ENCODE measurements at regions of chr5 and their contacts with region 1.

Region 1: DNA sequence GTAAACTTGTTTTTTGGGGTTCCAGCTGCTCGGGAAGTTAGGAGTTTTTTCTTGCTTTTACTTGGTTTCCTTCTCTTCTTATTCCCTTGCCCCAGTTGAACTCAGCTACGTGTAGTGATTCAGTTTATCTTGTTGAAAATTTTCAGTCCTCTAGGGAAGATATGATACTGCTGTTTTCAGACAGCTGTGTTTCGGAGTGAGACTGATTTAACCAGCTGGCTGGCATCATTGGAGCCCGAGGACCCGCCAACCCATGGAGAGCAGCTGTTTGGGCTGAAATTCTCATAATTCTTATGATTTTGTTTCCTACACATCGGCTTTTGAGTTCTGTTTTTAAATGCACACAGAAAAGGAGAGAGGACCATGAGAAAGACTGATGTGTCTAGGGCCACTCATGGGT is 271.5 kb downstream of the NR3C1 start:
- DNase-seq: no peak
- H3K4me3 Mint-ChIP-seq: no peak overlapping the region
- H3K27ac Mint-ChIP-seq: no peak overlapping the region
- H3K4me1 Mint-ChIP-seq: no peaks in the 10 kb centered on the region
- H3K27me3 Mint-ChIP-seq: no peaks in the 10 kb centered on the region

Region 2: GRCh38 chr5:142036918-142037317 is 1095.1 kb before region 1 on chr5:
- CTCF ChIA-PET with region 1: no interaction called
- POLR2A ChIA-PET with region 1: no interaction called
- intact Hi-C with region 1: no loop called
- DNase-seq: no peak
- H3K4me3 Mint-ChIP-seq: no peak overlapping the region
- H3K27ac Mint-ChIP-seq: no peak overlapping the region
- H3K4me1 Mint-ChIP-seq: peaks cover 13% of the 10 kb centered on the region
- H3K27me3 Mint-ChIP-seq: no peaks in the 10 kb centered on the region

Region 3: DNA sequence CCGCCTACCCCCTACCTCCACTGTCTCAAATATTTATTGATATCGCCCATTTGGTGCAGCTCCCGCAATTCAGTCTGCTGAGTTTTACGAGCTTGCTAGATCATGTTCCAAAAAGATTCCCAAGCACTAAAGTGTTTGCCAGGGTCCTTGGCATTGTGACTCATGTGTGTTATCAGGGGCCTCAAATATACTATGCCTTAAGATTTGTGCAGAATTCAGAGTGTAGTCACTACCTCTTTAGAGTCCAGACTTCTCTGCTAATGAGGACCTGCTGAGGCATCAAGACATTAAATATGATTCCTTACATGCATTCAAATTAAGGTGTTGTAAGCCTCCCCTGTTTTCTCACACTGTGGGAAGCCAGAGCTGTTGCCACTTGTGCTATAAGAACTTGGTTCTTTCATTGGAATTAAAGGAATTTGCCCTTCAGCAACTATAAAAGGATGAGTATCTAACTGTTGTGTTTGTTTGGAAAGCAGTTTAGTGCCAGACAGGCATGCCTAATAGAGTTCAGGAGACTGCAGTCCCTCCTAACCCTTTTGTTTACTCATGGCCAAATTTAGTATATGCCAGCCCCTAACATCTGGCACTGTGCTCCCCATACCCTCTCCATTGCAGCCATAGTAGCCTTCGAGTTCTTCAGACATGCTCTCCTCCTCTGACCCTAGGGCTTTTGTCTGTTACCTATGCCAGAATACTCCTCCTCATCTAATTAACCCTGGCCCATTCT is 44.9 kb before region 1 on chr5:
- CTCF ChIA-PET with region 1: no interaction called
- POLR2A ChIA-PET with region 1: no interaction called
- intact Hi-C with region 1: no loop called
- DNase-seq: no peak
- H3K4me3 Mint-ChIP-seq: no peak overlapping the region
- H3K27ac Mint-ChIP-seq: no peak overlapping the region
- H3K4me1 Mint-ChIP-seq: peaks cover 6% of the 10 kb centered on the region
- H3K27me3 Mint-ChIP-seq: no peaks in the 10 kb centered on the region

Region 4: DNA sequence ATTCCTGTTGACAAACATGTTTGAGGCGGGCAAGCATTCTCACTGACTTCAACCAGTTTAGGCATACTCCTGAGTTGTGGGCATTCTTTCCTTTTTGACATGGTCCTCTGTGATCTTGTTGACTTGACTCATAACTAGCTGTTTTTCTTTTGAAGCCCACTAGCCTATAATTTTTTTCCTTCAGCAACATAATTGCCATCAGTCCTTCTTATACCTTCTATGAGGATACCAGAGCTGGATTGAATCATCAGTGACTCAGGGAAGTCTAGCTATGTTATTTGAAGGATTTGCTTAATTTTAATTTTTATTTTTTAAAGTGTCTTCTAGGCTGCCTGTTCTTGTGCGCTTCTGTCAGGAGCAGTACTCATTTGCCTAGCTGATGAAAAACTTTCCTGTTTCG is 12.0 kb after region 1 on chr5:
- CTCF ChIA-PET with region 1: no interaction called
- POLR2A ChIA-PET with region 1: no interaction called
- intact Hi-C with region 1: loop called (anchors 2 kb)
- DNase-seq: no peak
- H3K4me3 Mint-ChIP-seq: no peak overlapping the region
- H3K27ac Mint-ChIP-seq: no peak overlapping the region
- H3K4me1 Mint-ChIP-seq: peaks cover 12% of the 10 kb centered on the region
- H3K27me3 Mint-ChIP-seq: no peaks in the 10 kb centered on the region

Region 5: DNA sequence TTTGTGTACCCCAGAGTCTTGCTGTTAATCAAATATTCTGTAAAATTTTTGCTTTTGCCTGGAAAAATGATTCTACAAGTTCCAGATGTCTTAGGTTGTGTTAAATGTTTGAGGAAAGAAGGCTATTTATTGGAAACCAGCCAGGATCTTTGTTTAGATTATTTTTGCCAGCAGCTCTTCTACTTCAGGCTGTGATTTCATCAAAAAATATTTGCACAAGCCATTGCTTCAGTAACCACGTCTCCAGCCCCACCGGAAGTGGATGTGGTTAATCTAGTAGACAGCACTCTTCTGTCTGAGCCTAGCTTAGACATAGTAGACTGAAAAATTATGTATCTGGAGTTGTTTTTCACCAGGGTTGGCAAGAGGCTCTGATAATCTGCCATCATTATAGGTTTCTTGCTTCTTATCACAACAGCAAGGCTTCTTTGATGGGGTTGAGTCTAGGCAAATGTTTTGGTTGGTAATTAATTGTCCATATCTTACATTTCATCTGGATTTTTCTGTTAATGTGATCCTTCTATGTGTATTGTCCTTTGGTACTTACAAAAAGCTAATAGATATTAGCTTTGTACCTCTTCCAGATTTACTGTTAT is 1055.8 kb after region 1 on chr5:
- CTCF ChIA-PET with region 1: no interaction called
- POLR2A ChIA-PET with region 1: no interaction called
- intact Hi-C with region 1: no loop called
- DNase-seq: peak; percentile 86
- H3K4me3 Mint-ChIP-seq: peak overlapping the region; percentile 23
- H3K27ac Mint-ChIP-seq: peak overlapping the region; percentile 89
- H3K4me1 Mint-ChIP-seq: peaks cover 48% of the 10 kb centered on the region
- H3K27me3 Mint-ChIP-seq: no peaks in the 10 kb centered on the region

Measured in activated CD4-positive, alpha-beta memory T cell treated with anti-CD3 and anti-CD28 coated beads for 36 hours (primary cell).